CD8-positive, alpha-beta memory T cell (primary cell): ENCODE measurements at regions of chr2 and their contacts with region 1.

Region 1: DNA sequence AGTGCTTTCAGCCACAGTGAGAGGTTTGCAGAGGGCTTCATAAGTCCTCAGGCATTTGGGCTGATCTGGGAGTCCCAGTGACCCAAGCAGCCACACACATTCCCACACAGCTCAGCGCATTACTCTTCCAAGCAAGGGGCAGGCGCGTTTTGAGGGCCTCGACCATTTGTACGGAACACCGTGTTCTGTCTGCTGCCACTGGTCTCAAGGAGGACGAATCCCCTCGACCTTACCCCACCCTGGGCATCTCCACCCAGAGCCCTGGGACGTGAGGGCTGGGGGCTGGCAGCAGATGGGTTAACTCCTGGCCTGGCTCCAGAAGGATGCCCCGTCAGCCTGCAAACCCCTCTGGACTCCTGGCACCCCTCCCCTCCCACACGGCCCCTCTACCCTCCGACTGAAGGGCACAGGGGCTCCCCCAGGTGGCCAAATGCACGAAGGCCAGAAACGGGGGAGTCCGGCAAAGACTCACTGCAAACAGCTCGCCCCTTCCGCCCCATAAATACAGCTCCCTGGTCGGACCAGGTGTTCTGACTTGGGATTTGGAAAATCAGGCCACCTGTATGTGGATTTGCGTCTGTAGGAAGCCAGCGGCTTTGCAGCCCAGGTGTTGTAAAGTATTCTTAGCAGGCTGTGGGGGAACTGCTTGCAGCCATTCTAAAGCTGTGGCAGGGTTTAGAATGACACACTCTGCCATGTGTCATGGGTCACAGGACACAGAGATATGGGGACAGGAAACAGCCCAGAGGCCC is 33.6 kb upstream of the PTMA start:
- DNase-seq: peak; percentile 15 to 64 (median 32)
- H3K4me3 ChIP-seq: no peak overlapping the region
- H3K4me3 Mint-ChIP-seq: no peak overlapping the region
- H3K27ac ChIP-seq: no peak overlapping the region
- H3K27ac Mint-ChIP-seq: peak overlapping the region in 2 of 8 donors; percentile 29 to 60
- H3K4me1 ChIP-seq: peaks cover 7% of the 10 kb centered on the region
- H3K4me1 Mint-ChIP-seq: peaks cover 2 to 8% (median 5%) of the 10 kb centered on the region in 3 donors
- H3K27me3 ChIP-seq: no peaks in the 10 kb centered on the region
- H3K27me3 Mint-ChIP-seq: peaks cover 0 to 4% of the 10 kb centered on the region in 2 donors

Region 2: GRCh38 chr2:230924470-230925341 is 750.1 kb before region 1 on chr2 and contains the start of gene GPR55:
- CTCF ChIA-PET with region 1: no interaction called
- POLR2A ChIA-PET with region 1: no interaction called
- DNase-seq: peak in 3 of 5 donors; percentile 18 to 73 (median 59)
- H3K4me3 ChIP-seq: peak within 1 kb of the TSS; percentile 61
- H3K4me3 Mint-ChIP-seq: peak within 1 kb of the TSS; percentile 85 to 94 (median 91)
- H3K27ac ChIP-seq: peak within 1 kb of the TSS; percentile 13
- H3K27ac Mint-ChIP-seq: peak within 1 kb of the TSS; percentile 61 to 97 (median 86)
- H3K4me1 ChIP-seq: peaks cover 21% of the 10 kb centered on the region
- H3K4me1 Mint-ChIP-seq: peaks cover 39 to 65% (median 50%) of the 10 kb centered on the region in 3 donors
- H3K27me3 ChIP-seq: no peaks in the 10 kb centered on the region
- H3K27me3 Mint-ChIP-seq: peaks cover 6 to 7% of the 10 kb centered on the region in 2 donors
- total RNA-seq, gene GPR55: 11.1 to 11.6 TPM

Region 3: GRCh38 chr2:231648587-231649174 is 26.1 kb before region 1 on chr2:
- CTCF ChIA-PET with region 1: interaction called, 11 read pairs
- POLR2A ChIA-PET with region 1: interaction called, 6 read pairs
- DNase-seq: peak; percentile 10 to 58 (median 23)
- H3K4me3 ChIP-seq: no peak overlapping the region
- H3K4me3 Mint-ChIP-seq: no peak overlapping the region
- H3K27ac ChIP-seq: no peak overlapping the region
- H3K27ac Mint-ChIP-seq: no peak overlapping the region
- H3K4me1 ChIP-seq: no peaks in the 10 kb centered on the region
- H3K4me1 Mint-ChIP-seq: no peaks in the 10 kb centered on the region
- H3K27me3 ChIP-seq: no peaks in the 10 kb centered on the region
- H3K27me3 Mint-ChIP-seq: peaks cover 1 to 7% of the 10 kb centered on the region in 2 donors

Region 4: DNA sequence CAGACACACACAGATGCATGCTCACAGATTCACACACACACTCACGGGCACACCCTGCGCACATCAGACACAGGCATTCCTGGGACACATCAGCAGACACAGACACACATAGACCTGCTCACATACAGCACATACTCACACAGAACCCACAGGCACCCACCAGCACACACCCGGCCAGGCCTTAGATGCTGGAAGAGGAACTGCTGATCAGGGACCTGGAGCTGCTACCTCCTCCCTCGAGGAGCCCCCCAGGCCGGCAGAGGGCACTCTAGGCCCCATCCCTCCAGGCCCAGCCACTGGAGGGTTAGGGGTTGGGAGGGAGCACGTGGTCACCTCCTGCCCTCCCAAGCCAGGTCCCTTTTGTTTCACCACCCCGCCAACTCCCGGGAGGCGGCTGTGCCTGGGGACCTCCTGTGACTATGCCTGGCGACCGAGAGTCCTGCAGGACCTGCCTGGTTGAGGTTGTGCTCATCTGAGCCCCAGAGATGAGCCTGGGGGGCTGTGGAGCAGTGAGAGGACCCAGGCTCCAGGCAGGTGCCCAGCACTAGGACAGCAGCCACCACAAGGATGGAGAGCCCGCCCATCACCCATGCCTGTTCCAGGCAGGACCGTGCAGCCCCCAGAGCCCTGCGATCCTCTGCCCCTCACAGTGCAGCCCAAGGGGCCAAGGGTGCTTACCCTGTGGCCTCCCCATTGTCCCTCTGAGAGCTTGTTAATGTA is 12.5 kb after region 1 on chr2:
- CTCF ChIA-PET with region 1: interaction called, 58 read pairs
- POLR2A ChIA-PET with region 1: no interaction called
- DNase-seq: peak; percentile 34 to 75 (median 52)
- H3K4me3 ChIP-seq: no peak overlapping the region
- H3K4me3 Mint-ChIP-seq: no peak overlapping the region
- H3K27ac ChIP-seq: no peak overlapping the region
- H3K27ac Mint-ChIP-seq: peak overlapping the region in 1 of 8 donors; percentile 43
- H3K4me1 ChIP-seq: no peaks in the 10 kb centered on the region
- H3K4me1 Mint-ChIP-seq: peaks cover 4 to 7% (median 5%) of the 10 kb centered on the region in 3 donors
- H3K27me3 ChIP-seq: no peaks in the 10 kb centered on the region
- H3K27me3 Mint-ChIP-seq: peaks cover 6 to 11% of the 10 kb centered on the region in 2 donors

Region 5: DNA sequence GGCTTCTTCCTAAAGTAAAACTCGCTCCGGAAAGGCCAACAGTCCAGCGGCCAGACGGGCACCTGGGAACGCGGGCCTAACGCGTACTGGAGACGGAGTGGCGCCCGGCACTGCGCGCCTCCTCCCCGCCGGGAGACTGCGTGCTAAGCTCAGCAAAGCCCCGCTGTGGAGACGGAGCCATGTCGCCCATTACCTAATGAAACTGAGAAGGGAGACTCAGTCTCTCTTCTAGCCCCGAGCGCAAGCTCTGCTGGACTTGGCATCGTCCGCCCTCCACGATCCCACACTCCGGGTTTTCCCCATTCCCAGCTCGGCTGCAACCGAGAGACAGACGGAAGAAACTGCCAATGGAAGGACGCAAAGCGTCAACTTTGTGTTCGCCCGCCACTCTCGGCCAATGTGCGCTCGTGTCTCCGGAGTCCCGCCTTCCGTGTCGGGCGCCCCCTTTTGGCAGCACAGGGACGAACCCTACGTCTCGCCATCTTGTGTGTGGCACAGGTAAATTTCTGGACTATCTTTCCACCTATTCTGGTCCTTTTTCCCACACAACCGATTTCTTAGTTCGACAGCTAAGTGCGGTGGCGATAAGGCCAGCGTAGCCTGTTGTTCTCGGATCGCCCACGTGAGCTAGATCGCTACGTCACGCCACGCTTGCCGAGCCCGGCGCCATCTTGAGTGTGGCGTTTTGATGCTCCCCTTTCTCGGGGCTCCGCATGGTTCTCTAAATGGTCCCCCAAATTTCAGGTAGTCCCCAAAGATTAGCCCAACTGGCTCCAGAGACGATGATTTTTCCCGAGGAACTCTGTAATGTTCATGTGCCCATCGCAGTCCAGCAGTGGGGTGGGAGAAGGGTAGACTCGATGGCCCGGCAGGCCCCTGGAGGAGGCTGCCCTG is 32.2 kb after region 1 on chr2:
- CTCF ChIA-PET with region 1: interaction called, 357 read pairs
- POLR2A ChIA-PET with region 1: interaction called, 11 read pairs
- DNase-seq: peak; percentile 95 to 98 (median 97)
- H3K4me3 ChIP-seq: peak overlapping the region; percentile 86
- H3K4me3 Mint-ChIP-seq: peak overlapping the region; percentile 91 to 99 (median 98)
- H3K27ac ChIP-seq: peak overlapping the region; percentile 99
- H3K27ac Mint-ChIP-seq: peak overlapping the region; percentile 100
- H3K4me1 ChIP-seq: peaks cover 24% of the 10 kb centered on the region
- H3K4me1 Mint-ChIP-seq: peaks cover 23 to 41% (median 26%) of the 10 kb centered on the region in 3 donors
- H3K27me3 ChIP-seq: no peaks in the 10 kb centered on the region
- H3K27me3 Mint-ChIP-seq: peaks cover 0 to 16% of the 10 kb centered on the region in 2 donors